Activated CD4-positive, alpha-beta memory T cell treated with anti-CD3 and anti-CD28 coated beads for 36 hours (primary cell): ENCODE measurements at regions of chr15 and their contacts with region 1.

Region 1: GRCh38 chr15:88258093-88258641 is 1.6 kb upstream of the NTRK3 start:
- DNase-seq: peak; percentile 41
- H3K4me3 Mint-ChIP-seq: peak overlapping the region; percentile 20
- H3K27ac Mint-ChIP-seq: no peak overlapping the region
- H3K4me1 Mint-ChIP-seq: peaks cover 25% of the 10 kb centered on the region
- H3K27me3 Mint-ChIP-seq: peaks cover 55% of the 10 kb centered on the region

Region 2: GRCh38 chr15:88218550-88219221 is 39.5 kb before region 1 on chr15:
- CTCF ChIA-PET with region 1: no interaction called
- POLR2A ChIA-PET with region 1: no interaction called
- intact Hi-C with region 1: no loop called
- DNase-seq: no peak
- H3K4me3 Mint-ChIP-seq: no peak overlapping the region
- H3K27ac Mint-ChIP-seq: no peak overlapping the region
- H3K4me1 Mint-ChIP-seq: no peaks in the 10 kb centered on the region
- H3K27me3 Mint-ChIP-seq: no peaks in the 10 kb centered on the region

Region 3: GRCh38 chr15:88331280-88331679 is 73.1 kb after region 1 on chr15:
- CTCF ChIA-PET with region 1: no interaction called
- POLR2A ChIA-PET with region 1: no interaction called
- intact Hi-C with region 1: loop called (anchors 5 kb)
- DNase-seq: peak; percentile 68
- H3K4me3 Mint-ChIP-seq: no peak overlapping the region
- H3K27ac Mint-ChIP-seq: no peak overlapping the region
- H3K4me1 Mint-ChIP-seq: no peaks in the 10 kb centered on the region
- H3K27me3 Mint-ChIP-seq: peaks cover 11% of the 10 kb centered on the region

Region 4: DNA sequence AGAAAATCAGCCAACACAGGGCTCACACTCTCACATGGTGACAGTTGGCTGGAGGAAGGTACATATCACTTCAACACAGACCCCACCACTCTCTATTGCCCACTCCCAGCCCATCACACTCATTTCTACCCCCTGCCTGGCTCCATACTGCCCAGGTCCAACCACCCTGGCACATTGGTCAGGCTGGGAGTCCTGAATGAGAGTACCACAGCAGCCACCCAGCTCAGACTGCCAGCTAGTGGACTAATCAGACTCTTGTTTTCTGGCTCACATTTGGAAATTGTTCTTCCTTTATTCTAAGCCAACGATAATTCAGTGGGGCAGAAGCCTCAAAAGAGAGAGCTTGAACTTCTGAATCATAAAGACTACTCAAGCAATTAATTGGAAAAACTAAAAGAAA is 189.0 kb after region 1 on chr15:
- CTCF ChIA-PET with region 1: interaction called, 7 read pairs
- POLR2A ChIA-PET with region 1: no interaction called
- intact Hi-C with region 1: loop called (anchors 5 kb)
- DNase-seq: no peak
- H3K4me3 Mint-ChIP-seq: no peak overlapping the region
- H3K27ac Mint-ChIP-seq: no peak overlapping the region
- H3K4me1 Mint-ChIP-seq: peaks cover 4% of the 10 kb centered on the region
- H3K27me3 Mint-ChIP-seq: peaks cover 12% of the 10 kb centered on the region